ENCODE measurements at regions of chr6 and their contacts with region 1.

Region 1: GRCh38 chr6:139375232-139376016 is 976 bp upstream of the CITED2 start:
- DNase-seq: peak; percentile 95 to 96
- H3K4me3 ChIP-seq: peak overlapping the region; percentile 90
- H3K4me3 Mint-ChIP-seq: peak overlapping the region; percentile 99
- H3K27ac Mint-ChIP-seq: peak overlapping the region; percentile 95
- H3K4me1 ChIP-seq: peaks cover 50% of the 10 kb centered on the region
- H3K4me1 Mint-ChIP-seq: peaks cover 41% of the 10 kb centered on the region
- H3K27me3 ChIP-seq: no peaks in the 10 kb centered on the region
- H3K27me3 Mint-ChIP-seq: no peaks in the 10 kb centered on the region
- CTCF ChIP-seq: no peak

Region 2: DNA sequence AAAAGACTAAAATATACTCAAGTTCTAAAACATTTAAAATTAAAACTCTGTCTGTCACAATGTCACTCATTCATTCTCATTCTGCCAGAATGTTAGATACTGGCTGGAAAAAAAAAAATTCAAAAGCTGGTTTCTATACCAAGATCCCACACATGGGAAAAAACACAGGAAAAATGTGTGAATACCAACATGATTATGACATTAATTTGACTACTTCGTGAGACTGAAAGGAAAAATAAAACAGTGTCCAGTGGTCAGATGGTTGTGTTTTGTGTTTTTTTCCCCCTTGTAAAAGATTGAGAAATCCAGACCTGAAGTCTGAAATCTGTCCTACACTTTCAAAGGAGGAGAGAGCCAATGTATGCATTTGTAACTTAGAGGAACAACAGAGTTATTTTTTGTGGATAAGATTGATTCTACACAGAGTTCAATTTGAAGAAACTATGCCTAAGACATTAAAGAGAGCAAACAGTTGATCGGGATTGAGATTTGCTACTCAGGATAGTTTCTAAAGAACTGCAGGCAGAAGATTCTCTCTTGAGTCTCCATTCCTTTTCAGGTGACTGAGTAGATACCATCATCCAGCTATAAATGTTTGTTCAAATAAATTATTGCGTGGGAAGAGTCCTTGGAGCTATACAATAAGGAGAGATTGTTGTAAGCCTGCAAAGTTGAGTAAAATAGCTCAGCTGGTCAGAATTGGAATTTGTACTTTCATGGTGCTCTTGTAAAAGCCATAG is 44.4 kb before region 1 on chr6:
- CTCF ChIA-PET with region 1: no interaction called
- POLR2A ChIA-PET with region 1: no interaction called
- intact Hi-C with region 1: no loop called
- DNase-seq: no peak
- H3K4me3 ChIP-seq: no peak overlapping the region
- H3K4me3 Mint-ChIP-seq: no peak overlapping the region
- H3K27ac Mint-ChIP-seq: no peak overlapping the region
- H3K4me1 ChIP-seq: no peaks in the 10 kb centered on the region
- H3K4me1 Mint-ChIP-seq: no peaks in the 10 kb centered on the region
- H3K27me3 ChIP-seq: no peaks in the 10 kb centered on the region
- H3K27me3 Mint-ChIP-seq: peaks cover 5% of the 10 kb centered on the region
- CTCF ChIP-seq: no peak

Region 3: GRCh38 chr6:139433631-139434419 is 58.4 kb after region 1 on chr6:
- CTCF ChIA-PET with region 1: interaction called, 4 read pairs
- POLR2A ChIA-PET with region 1: interaction called, 4 read pairs
- intact Hi-C with region 1: loop called (anchors 5 kb)
- DNase-seq: peak; percentile 39 to 41
- H3K4me3 ChIP-seq: no peak overlapping the region
- H3K4me3 Mint-ChIP-seq: no peak overlapping the region
- H3K27ac Mint-ChIP-seq: peak overlapping the region; percentile 86
- H3K4me1 ChIP-seq: peaks cover 20% of the 10 kb centered on the region
- H3K4me1 Mint-ChIP-seq: peaks cover 22% of the 10 kb centered on the region
- H3K27me3 ChIP-seq: no peaks in the 10 kb centered on the region
- H3K27me3 Mint-ChIP-seq: no peaks in the 10 kb centered on the region
- CTCF ChIP-seq: no peak

Region 4: GRCh38 chr6:139588076-139588639 is 212.7 kb after region 1 on chr6:
- CTCF ChIA-PET with region 1: interaction called, 3 read pairs
- POLR2A ChIA-PET with region 1: interaction called, 13 read pairs
- intact Hi-C with region 1: loop called (anchors 1 kb)
- DNase-seq: peak; percentile 30 to 45
- H3K4me3 ChIP-seq: no peak overlapping the region
- H3K4me3 Mint-ChIP-seq: peak overlapping the region; percentile 22
- H3K27ac Mint-ChIP-seq: peak overlapping the region; percentile 91
- H3K4me1 ChIP-seq: peaks cover 71% of the 10 kb centered on the region
- H3K4me1 Mint-ChIP-seq: peaks cover 71% of the 10 kb centered on the region
- H3K27me3 ChIP-seq: no peaks in the 10 kb centered on the region
- H3K27me3 Mint-ChIP-seq: no peaks in the 10 kb centered on the region
- CTCF ChIP-seq: no peak

Region 5: GRCh38 chr6:139708337-139709199 is 333.1 kb after region 1 on chr6:
- CTCF ChIA-PET with region 1: interaction called, 11 read pairs
- POLR2A ChIA-PET with region 1: interaction called, 19 read pairs
- intact Hi-C with region 1: loop called (anchors 2 kb)
- DNase-seq: peak; percentile 64 to 76
- H3K4me3 ChIP-seq: no peak overlapping the region
- H3K4me3 Mint-ChIP-seq: peak overlapping the region; percentile 54
- H3K27ac Mint-ChIP-seq: peak overlapping the region; percentile 72
- H3K4me1 ChIP-seq: peaks cover 38% of the 10 kb centered on the region
- H3K4me1 Mint-ChIP-seq: peaks cover 12% of the 10 kb centered on the region
- H3K27me3 ChIP-seq: no peaks in the 10 kb centered on the region
- H3K27me3 Mint-ChIP-seq: no peaks in the 10 kb centered on the region
- CTCF ChIP-seq: no peak

Region 6: GRCh38 chr6:139881728-139882211 is 506.3 kb after region 1 on chr6:
- CTCF ChIA-PET with region 1: no interaction called
- POLR2A ChIA-PET with region 1: interaction called, 3 read pairs
- intact Hi-C with region 1: loop called (anchors 5 kb)
- DNase-seq: peak in 1 of 2 experiments; percentile 48
- H3K4me3 ChIP-seq: no peak overlapping the region
- H3K4me3 Mint-ChIP-seq: no peak overlapping the region
- H3K27ac Mint-ChIP-seq: no peak overlapping the region
- H3K4me1 ChIP-seq: peaks cover 16% of the 10 kb centered on the region
- H3K4me1 Mint-ChIP-seq: peaks cover 2% of the 10 kb centered on the region
- H3K27me3 ChIP-seq: no peaks in the 10 kb centered on the region
- H3K27me3 Mint-ChIP-seq: no peaks in the 10 kb centered on the region
- CTCF ChIP-seq: peak; percentile 37 to 46

Region 7: GRCh38 chr6:140105857-140106256 is 730.4 kb after region 1 on chr6:
- CTCF ChIA-PET with region 1: no interaction called
- POLR2A ChIA-PET with region 1: no interaction called
- intact Hi-C with region 1: loop called (anchors 5 kb)
- DNase-seq: peak; percentile 41 to 55
- H3K4me3 ChIP-seq: no peak overlapping the region
- H3K4me3 Mint-ChIP-seq: no peak overlapping the region
- H3K27ac Mint-ChIP-seq: no peak overlapping the region
- H3K4me1 ChIP-seq: no peaks in the 10 kb centered on the region
- H3K4me1 Mint-ChIP-seq: peaks cover 7% of the 10 kb centered on the region
- H3K27me3 ChIP-seq: no peaks in the 10 kb centered on the region
- H3K27me3 Mint-ChIP-seq: no peaks in the 10 kb centered on the region
- CTCF ChIP-seq: peak; percentile 26 to 67

Measured in Caco-2 (cell line).